ENCODE measurements at regions of chr1 and their contacts with region 1.

Region 1: DNA sequence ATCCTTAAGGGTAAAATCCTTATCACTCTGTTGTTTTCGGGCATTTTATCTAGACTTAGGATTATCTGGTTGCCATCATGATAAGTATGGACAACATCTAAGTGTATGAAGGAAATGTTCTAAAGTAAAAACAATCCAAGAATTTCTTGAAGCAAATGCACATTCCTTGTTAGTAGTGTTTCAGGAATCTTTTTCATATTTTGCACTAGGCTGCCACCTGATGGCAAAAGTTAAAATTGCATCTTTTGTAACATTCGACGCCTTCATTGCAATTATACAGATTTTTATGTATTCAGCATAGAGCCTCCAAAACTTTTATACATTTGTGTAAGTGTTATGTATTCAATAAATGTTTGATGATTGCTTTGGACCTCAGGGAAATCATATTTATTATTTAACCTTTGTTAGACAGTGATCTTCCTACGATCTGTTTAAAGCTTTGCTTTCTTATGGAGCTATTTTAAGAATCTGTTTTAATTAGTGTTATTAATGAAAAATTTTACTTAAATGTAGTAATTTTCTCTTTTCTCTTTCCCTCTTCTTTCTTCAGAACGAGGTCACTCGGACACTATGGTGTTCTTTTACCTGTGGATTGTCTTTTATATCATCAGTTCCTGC is 49.4 kb upstream of the KIAA1614 start:
- DNase-seq: peak; percentile 80
- H3K4me3 ChIP-seq: no peak overlapping the region
- H3K27ac ChIP-seq: no peak overlapping the region
- H3K4me1 ChIP-seq: peaks cover 3% of the 10 kb centered on the region
- H3K27me3 ChIP-seq: no peaks in the 10 kb centered on the region
- CTCF ChIP-seq: peak; percentile 42 to 45
- POLR2A ChIP-seq: no peak

Region 2: GRCh38 chr1:180502360-180503273 is 360.6 kb before region 1 on chr1 and contains the start of gene ACBD6:
- CTCF ChIA-PET with region 1: interaction called, 9 read pairs
- POLR2A ChIA-PET with region 1: no interaction called
- dilution Hi-C with region 1: loop called (anchors 25 kb)
- intact Hi-C with region 1: no loop called
- DNase-seq: peak; percentile 93
- H3K4me3 ChIP-seq: peak within 1 kb of the TSS; percentile 32 to 81 (median 81)
- H3K27ac ChIP-seq: peak within 1 kb of the TSS; percentile 60
- H3K4me1 ChIP-seq: peaks cover 26% of the 10 kb centered on the region
- H3K27me3 ChIP-seq: no peaks in the 10 kb centered on the region
- CTCF ChIP-seq: peak in 1 of 2 donors; percentile 15
- POLR2A ChIP-seq: peak; percentile 18
- total RNA-seq, gene ACBD6: 52.8 and 56.4 TPM in 2 replicates

Region 3: GRCh38 chr1:180533266-180533987 is 329.8 kb before region 1 on chr1:
- CTCF ChIA-PET with region 1: interaction called, 247 read pairs
- POLR2A ChIA-PET with region 1: no interaction called
- dilution Hi-C with region 1: no loop called
- intact Hi-C with region 1: loop called (anchors 1 kb)
- DNase-seq: peak; percentile 66
- H3K4me3 ChIP-seq: no peak overlapping the region
- H3K27ac ChIP-seq: no peak overlapping the region
- H3K4me1 ChIP-seq: peaks cover 20% of the 10 kb centered on the region
- H3K27me3 ChIP-seq: peaks cover 6 to 18% of the 10 kb centered on the region in 2 experiments
- CTCF ChIP-seq: peak; percentile 79 to 88
- POLR2A ChIP-seq: no peak

Region 4: GRCh38 chr1:180617774-180618395 is 245.4 kb before region 1 on chr1:
- CTCF ChIA-PET with region 1: interaction called, 13 read pairs
- POLR2A ChIA-PET with region 1: no interaction called
- dilution Hi-C with region 1: no loop called
- intact Hi-C with region 1: no loop called
- DNase-seq: peak; percentile 21
- H3K4me3 ChIP-seq: no peak overlapping the region
- H3K27ac ChIP-seq: no peak overlapping the region
- H3K4me1 ChIP-seq: peaks cover 6% of the 10 kb centered on the region
- H3K27me3 ChIP-seq: peaks cover 0 to 12% of the 10 kb centered on the region in 2 experiments
- CTCF ChIP-seq: no peak
- POLR2A ChIP-seq: no peak

Region 5: DNA sequence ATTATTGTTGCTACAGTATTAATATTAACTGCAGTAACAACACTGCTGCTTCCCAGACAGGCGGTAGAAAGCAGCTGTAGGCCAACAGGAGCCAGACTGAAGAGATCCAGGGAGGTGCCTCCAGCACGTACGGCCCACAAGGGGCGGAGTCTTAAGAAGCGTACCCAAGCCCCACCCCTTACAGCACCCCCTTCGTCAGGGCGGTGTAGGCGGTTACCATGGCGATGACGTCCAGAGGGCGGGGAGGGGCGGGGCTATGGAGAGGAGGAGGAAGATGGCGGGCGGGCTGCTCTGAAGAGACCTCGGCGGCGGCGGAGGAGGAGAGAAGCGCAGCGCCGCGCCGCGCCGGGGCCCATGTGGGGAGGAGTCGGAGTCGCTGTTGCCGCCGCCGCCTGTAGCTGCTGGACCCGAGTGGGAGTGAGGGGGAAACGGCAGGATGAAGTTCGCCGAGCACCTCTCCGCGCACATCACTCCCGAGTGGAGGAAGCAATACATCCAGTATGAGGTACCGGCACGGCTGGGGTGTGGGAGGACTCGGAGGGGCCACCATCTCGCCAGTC is 231.4 kb before region 1 on chr1 and contains the start of gene XPR1:
- CTCF ChIA-PET with region 1: interaction called, 55 read pairs
- POLR2A ChIA-PET with region 1: no interaction called
- dilution Hi-C with region 1: no loop called
- intact Hi-C with region 1: no loop called
- DNase-seq: peak; percentile 99
- H3K4me3 ChIP-seq: peak within 1 kb of the TSS; percentile 71 to 90 (median 87)
- H3K27ac ChIP-seq: peak within 1 kb of the TSS; percentile 34
- H3K4me1 ChIP-seq: peaks cover 13% of the 10 kb centered on the region
- H3K27me3 ChIP-seq: peaks cover 3 to 5% of the 10 kb centered on the region in 2 experiments
- CTCF ChIP-seq: peak in 1 of 2 donors; percentile 26
- POLR2A ChIP-seq: peak; percentile 52
- total RNA-seq, gene XPR1: 26.7 and 29.3 TPM in 2 replicates

Region 6: GRCh38 chr1:180734366-180734765 is 128.9 kb before region 1 on chr1:
- CTCF ChIA-PET with region 1: no interaction called
- POLR2A ChIA-PET with region 1: no interaction called
- dilution Hi-C with region 1: no loop called
- intact Hi-C with region 1: no loop called
- DNase-seq: no peak
- H3K4me3 ChIP-seq: no peak overlapping the region
- H3K27ac ChIP-seq: no peak overlapping the region
- H3K4me1 ChIP-seq: no peaks in the 10 kb centered on the region
- H3K27me3 ChIP-seq: no peaks in the 10 kb centered on the region
- CTCF ChIP-seq: no peak
- POLR2A ChIP-seq: no peak

Region 7: GRCh38 chr1:180851995-180852887 is 11.0 kb before region 1 on chr1:
- CTCF ChIA-PET with region 1: interaction called, 45 read pairs
- POLR2A ChIA-PET with region 1: no interaction called
- dilution Hi-C with region 1: no loop called
- intact Hi-C with region 1: no loop called
- DNase-seq: no peak
- H3K4me3 ChIP-seq: no peak overlapping the region
- H3K27ac ChIP-seq: no peak overlapping the region
- H3K4me1 ChIP-seq: peaks cover 20% of the 10 kb centered on the region
- H3K27me3 ChIP-seq: no peaks in the 10 kb centered on the region
- CTCF ChIP-seq: no peak
- POLR2A ChIP-seq: no peak